T-cell (primary cell): ENCODE measurements at regions of chr9 and their contacts with region 1.

Region 1: DNA sequence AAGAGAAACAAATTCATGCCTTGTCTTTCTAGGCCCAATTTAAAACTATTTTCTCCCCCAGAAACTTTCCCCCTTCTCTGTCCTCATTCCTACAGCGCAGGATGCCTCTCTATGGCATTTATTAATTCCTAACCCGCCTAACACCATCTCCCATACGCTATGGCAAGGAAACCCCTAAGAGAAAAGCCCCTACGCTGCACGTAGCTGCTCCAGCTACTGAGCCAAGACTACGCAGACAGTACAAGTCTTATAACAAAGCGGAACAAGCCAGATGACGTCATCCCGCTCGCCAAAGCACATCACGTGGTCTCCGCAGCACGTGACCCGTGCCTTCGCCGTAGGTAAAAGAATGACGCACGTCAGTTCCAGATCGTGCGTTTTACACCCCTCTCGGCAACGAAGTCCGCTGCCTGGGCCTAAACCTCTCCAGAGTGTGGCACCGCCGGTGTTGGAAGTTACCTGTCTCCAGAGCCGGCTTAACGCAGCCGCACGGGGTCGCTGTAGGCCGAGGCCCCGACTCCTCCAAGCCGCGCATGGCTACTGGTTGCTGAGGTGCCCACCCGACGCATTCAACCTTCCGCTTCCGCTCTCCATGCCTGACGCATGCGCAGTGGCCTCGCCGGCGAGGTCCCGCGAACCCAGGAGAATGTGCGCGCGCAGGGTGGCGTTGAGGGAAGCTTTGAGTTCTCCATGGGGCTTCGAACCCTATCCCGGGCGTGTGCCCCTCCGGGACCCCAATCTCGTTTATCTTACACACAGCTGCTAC is at the start of gene TRMO:
- DNase-seq: peak; percentile 96 to 100 (median 97)
- ATAC-seq: peak; percentile 77 to 82 (median 78)
- H3K4me3 ChIP-seq: peak within 1 kb of the TSS; percentile 69 to 74
- H3K4me3 Mint-ChIP-seq: peak within 1 kb of the TSS; percentile 87 to 96 (median 92)
- H3K27ac ChIP-seq: peak within 1 kb of the TSS; percentile 99
- H3K27ac Mint-ChIP-seq: peak within 1 kb of the TSS; percentile 98 to 100
- H3K4me1 ChIP-seq: peaks cover 36 to 38% of the 10 kb centered on the region in 2 experiments
- H3K4me1 Mint-ChIP-seq: peaks cover 50 to 55% (median 53%) of the 10 kb centered on the region in 3 donors
- H3K27me3 ChIP-seq: no peaks in the 10 kb centered on the region
- H3K27me3 Mint-ChIP-seq: no peaks in the 10 kb centered on the region
- total RNA-seq, gene TRMO: 38.8 to 47.4 (median 44.7) TPM

Region 2: GRCh38 chr9:97866848-97867247 is 55.3 kb before region 1 on chr9:
- CTCF ChIA-PET with region 1: no interaction called
- POLR2A ChIA-PET with region 1: no interaction called
- DNase-seq: no peak
- ATAC-seq: no peak
- H3K4me3 ChIP-seq: no peak overlapping the region
- H3K4me3 Mint-ChIP-seq: no peak overlapping the region
- H3K27ac ChIP-seq: no peak overlapping the region
- H3K27ac Mint-ChIP-seq: no peak overlapping the region
- H3K4me1 ChIP-seq: no peaks in the 10 kb centered on the region
- H3K4me1 Mint-ChIP-seq: no peaks in the 10 kb centered on the region
- H3K27me3 ChIP-seq: peaks cover 2 to 22% of the 10 kb centered on the region in 2 experiments
- H3K27me3 Mint-ChIP-seq: peaks cover 28 to 43% of the 10 kb centered on the region in 2 donors

Region 3: GRCh38 chr9:97900738-97901565 is 21.2 kb before region 1 on chr9:
- CTCF ChIA-PET with region 1: interaction called, 10 to 59 read pairs
- POLR2A ChIA-PET with region 1: interaction called, 28 to 62 read pairs
- DNase-seq: peak in 4 of 35 experiments; percentile 13 to 79 (median 26)
- ATAC-seq: no peak
- H3K4me3 ChIP-seq: no peak overlapping the region
- H3K4me3 Mint-ChIP-seq: peak overlapping the region in 1 of 3 donors; percentile 47
- H3K27ac ChIP-seq: peak overlapping the region; percentile 60
- H3K27ac Mint-ChIP-seq: peak overlapping the region; percentile 85 to 88
- H3K4me1 ChIP-seq: peaks cover 38 to 51% of the 10 kb centered on the region in 2 experiments
- H3K4me1 Mint-ChIP-seq: peaks cover 54 to 67% (median 66%) of the 10 kb centered on the region in 3 donors
- H3K27me3 ChIP-seq: no peaks in the 10 kb centered on the region
- H3K27me3 Mint-ChIP-seq: no peaks in the 10 kb centered on the region

Region 4: DNA sequence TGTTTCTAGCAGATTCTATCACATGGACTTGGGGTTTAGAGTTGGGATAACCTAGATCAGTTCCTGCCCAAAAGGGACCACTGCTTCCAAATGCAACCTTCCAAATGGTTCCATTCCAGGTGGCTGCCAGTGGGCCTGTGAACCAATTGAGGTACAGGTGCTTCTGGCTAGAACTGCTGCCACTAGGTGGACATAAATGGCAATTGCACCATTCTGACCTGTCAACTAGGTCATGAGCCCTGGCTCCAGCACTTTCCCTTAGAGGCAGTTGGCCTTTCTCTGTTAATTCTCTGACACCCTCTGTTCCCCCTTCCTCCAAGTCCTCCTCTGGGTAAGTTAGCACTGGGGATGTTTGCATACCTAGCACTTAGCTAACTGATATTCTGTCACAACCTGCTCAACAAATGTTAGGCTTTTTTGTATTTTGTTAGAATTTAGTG is 32.4 kb after region 1 on chr9:
- CTCF ChIA-PET with region 1: interaction called, 7 to 48 read pairs
- POLR2A ChIA-PET with region 1: interaction called in 1 of 2 experiments, 3 read pairs
- DNase-seq: peak; percentile 16 to 80 (median 43)
- ATAC-seq: peak; percentile 88 to 95 (median 91)
- H3K4me3 ChIP-seq: no peak overlapping the region
- H3K4me3 Mint-ChIP-seq: no peak overlapping the region
- H3K27ac ChIP-seq: no peak overlapping the region
- H3K27ac Mint-ChIP-seq: peak overlapping the region in 1 of 2 donors; percentile 25
- H3K4me1 ChIP-seq: peaks cover 0 to 5% of the 10 kb centered on the region in 2 experiments
- H3K4me1 Mint-ChIP-seq: peaks cover 4 to 17% (median 14%) of the 10 kb centered on the region in 3 donors
- H3K27me3 ChIP-seq: peaks cover 0 to 5% of the 10 kb centered on the region in 2 experiments
- H3K27me3 Mint-ChIP-seq: no peaks in the 10 kb centered on the region

Region 5: DNA sequence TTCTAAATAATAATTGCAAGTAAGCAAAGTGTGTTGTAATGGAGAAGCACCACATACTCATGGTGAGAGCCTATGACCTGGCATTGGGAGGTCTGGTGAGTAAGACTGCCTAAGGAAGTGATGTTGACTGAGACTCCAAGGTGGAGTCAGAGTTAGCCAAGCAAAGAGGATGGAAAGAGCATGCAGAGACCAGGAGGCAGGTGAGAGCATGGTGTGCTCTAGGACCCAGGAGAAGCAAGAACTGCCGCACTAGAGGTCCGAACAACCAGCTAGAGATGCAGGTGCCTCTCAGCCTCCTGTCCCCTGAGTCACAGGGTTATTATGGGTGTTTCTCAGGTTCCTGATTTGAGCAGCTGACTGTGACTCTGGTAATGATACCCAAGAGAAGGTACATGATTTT is 88.3 kb after region 1 on chr9:
- CTCF ChIA-PET with region 1: no interaction called
- POLR2A ChIA-PET with region 1: interaction called in 1 of 2 experiments, 10 read pairs
- DNase-seq: no peak
- ATAC-seq: peak in 2 of 4 experiments; percentile 43 to 45
- H3K4me3 ChIP-seq: no peak overlapping the region
- H3K4me3 Mint-ChIP-seq: no peak overlapping the region
- H3K27ac ChIP-seq: no peak overlapping the region
- H3K27ac Mint-ChIP-seq: peak overlapping the region in 1 of 2 donors; percentile 29
- H3K4me1 ChIP-seq: peaks cover 0 to 5% of the 10 kb centered on the region in 2 experiments
- H3K4me1 Mint-ChIP-seq: peaks cover 18 to 25% (median 24%) of the 10 kb centered on the region in 3 donors
- H3K27me3 ChIP-seq: no peaks in the 10 kb centered on the region
- H3K27me3 Mint-ChIP-seq: no peaks in the 10 kb centered on the region

Region 6: DNA sequence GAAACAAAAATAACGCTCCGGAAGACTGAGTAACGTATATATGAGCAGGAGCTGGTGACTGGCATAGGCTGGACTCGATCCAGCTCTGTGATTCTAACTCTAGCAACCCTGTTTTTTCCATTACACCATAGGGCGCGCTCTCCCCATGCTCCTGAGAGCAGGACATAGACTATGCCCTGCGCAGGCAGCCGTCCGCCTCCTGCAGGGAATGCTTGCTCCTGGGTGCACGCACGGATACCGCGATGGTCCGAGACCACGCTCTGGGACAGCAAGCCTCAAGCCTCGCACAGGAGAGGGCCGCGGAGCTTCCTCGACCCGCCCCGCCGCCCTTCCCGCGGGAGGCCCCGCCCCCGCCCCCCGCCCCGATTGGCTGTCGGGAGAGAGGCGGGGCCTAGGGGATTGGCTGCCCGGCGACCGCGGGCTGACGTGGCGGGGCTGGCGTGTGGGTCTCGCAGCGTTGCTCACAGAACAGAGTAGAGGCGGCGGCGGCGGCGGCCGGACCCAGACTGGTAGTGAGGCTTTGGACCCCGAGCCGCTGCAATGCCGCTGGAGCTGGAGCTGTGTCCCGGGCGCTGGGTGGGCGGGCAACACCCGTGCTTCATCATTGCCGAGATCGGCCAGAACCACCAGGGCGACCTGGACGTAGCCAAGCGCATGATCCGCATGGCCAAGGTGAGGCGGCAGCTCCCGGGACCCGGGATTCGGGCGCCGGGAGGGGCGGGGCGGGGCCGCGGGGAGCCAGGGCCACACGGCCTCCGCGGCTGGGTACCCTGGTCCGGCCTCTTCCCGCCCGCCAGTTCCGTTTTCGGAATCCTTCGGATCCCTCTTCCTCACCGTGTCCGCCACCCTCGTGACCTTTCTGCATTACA is 134.4 kb after region 1 on chr9 and contains the start of gene NANS:
- CTCF ChIA-PET with region 1: interaction called, 3 to 12 read pairs
- POLR2A ChIA-PET with region 1: interaction called, 3 to 16 read pairs
- DNase-seq: peak; percentile 78 to 92 (median 88)
- ATAC-seq: peak; percentile 94 to 98 (median 96)
- H3K4me3 ChIP-seq: peak within 1 kb of the TSS; percentile 83 to 85
- H3K4me3 Mint-ChIP-seq: peak within 1 kb of the TSS; percentile 94 to 98 (median 94)
- H3K27ac ChIP-seq: peak within 1 kb of the TSS; percentile 83
- H3K27ac Mint-ChIP-seq: peak within 1 kb of the TSS; percentile 91 to 95
- H3K4me1 ChIP-seq: peaks cover 3 to 21% of the 10 kb centered on the region in 2 experiments
- H3K4me1 Mint-ChIP-seq: peaks cover 18 to 33% (median 29%) of the 10 kb centered on the region in 3 donors
- H3K27me3 ChIP-seq: no peaks in the 10 kb centered on the region
- H3K27me3 Mint-ChIP-seq: no peaks in the 10 kb centered on the region
- total RNA-seq, gene NANS: 21.7 to 57.5 (median 27.6) TPM